ENCODE measurements at regions of chr6 and their contacts with region 1.

Region 1: DNA sequence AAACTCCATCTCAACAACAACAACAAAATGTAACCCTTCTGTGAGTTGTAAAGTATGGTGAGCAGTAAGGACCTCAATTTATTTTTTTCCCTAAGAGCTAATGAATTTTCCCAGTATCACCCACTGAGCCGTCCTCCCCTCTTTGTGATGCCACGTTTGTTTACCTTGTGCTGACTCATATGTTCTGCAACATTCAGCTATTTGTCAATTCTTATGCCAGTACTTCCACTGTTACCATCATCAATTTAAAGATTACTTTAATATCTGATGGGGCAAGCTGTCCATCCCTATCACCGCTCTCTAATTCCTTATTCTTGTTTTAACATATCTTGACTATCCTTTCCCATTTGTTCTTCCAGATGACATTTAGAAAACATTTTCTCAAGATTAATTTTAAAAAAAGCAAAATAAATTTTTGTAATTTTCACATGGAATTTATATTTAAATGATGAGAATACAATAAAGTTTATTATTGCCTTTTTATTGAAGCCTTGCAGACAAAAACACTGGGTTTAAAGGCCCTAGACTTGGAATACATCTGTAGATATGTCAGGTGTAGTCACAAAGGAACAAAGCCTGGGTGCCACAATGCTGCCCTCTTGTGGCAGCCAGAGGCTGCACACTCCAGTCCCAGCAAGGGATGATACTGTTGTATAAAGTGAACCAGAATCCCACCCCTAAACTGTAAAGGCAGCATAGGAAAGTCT is 37.4 kb downstream of the MAK start:
- DNase-seq: peak; percentile 28
- ATAC-seq: peak; percentile 99
- H3K4me3 ChIP-seq: no peak overlapping the region
- H3K27ac ChIP-seq: no peak overlapping the region
- H3K4me1 ChIP-seq: peaks cover 6 to 7% of the 10 kb centered on the region in 2 experiments; a peak in 3 of 4 replicates
- H3K27me3 ChIP-seq: no peaks in the 10 kb centered on the region
- CTCF ChIP-seq: peak; percentile 75 to 99 (median 99)
- POLR2A ChIP-seq: no peak
- RAD21 ChIP-seq: peak; percentile 92

Region 2: DNA sequence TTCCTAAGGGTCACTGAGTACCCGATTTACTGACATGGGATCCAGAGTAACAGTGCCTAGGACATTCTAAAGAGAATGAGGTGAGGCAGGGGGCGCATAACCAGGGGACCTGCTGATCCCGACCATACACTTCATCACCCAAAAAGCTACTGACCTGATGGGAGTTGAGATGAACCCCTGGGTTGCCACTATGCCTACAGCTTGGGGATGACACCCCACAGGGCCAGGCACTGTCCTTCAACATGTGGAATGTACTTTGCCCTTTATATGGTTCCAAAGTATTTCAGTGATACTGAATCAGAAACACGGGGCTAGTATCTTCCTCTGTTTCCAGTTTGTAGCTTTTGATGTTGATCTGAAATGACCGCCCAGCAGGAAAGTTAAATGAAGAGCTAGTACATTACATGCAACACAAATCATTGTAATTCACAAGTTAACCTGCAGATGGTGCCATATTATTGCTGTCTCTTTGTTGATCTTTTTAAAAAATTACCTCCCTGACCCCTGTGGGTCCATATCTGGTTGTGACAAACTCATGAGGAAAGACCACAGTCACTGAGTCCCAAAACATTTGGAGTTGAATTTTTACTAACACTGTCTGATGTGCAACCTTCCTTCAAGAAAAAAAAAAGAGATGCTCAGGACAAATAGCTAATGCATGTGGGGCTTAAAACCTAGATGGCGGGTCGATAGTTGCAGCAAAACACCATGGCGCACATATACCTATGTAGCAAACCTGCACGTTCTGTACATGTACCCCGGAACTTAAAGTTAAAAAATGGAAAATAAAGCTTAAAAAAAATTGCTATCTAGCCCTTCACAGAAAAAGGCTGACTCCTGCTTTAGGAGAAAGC is 322.6 kb before region 1 on chr6:
- CTCF ChIA-PET with region 1: interaction called, 31 read pairs
- POLR2A ChIA-PET with region 1: no interaction called
- RAD21 ChIA-PET with region 1: interaction called in 1 of 2 experiments, 3 read pairs
- intact Hi-C with region 1: loop called (anchors 1 kb)
- DNase-seq: peak; percentile 41
- ATAC-seq: peak; percentile 79
- H3K4me3 ChIP-seq: no peak overlapping the region
- H3K27ac ChIP-seq: no peak overlapping the region
- H3K4me1 ChIP-seq: peaks cover 0 to 10% of the 10 kb centered on the region in 2 experiments; a peak in 2 of 4 replicates
- H3K27me3 ChIP-seq: no peaks in the 10 kb centered on the region
- CTCF ChIP-seq: peak; percentile 46 to 79 (median 56); a peak in 4 of 6 replicates
- POLR2A ChIP-seq: no peak
- RAD21 ChIP-seq: peak; percentile 85

Region 3: GRCh38 chr6:10510592-10511367 is 290.2 kb before region 1 on chr6:
- CTCF ChIA-PET with region 1: interaction called, 10 read pairs
- POLR2A ChIA-PET with region 1: no interaction called
- RAD21 ChIA-PET with region 1: interaction called in 1 of 2 experiments, 3 read pairs
- intact Hi-C with region 1: loop called (anchors 1 kb)
- DNase-seq: peak; percentile 38
- ATAC-seq: peak; percentile 100
- H3K4me3 ChIP-seq: no peak overlapping the region
- H3K27ac ChIP-seq: no peak overlapping the region
- H3K4me1 ChIP-seq: no peaks in the 10 kb centered on the region
- H3K27me3 ChIP-seq: no peaks in the 10 kb centered on the region
- CTCF ChIP-seq: peak; percentile 70 to 86 (median 84)
- POLR2A ChIP-seq: no peak
- RAD21 ChIP-seq: peak; percentile 94